ENCODE measurements at regions of chr20 and their contacts with region 1.

Region 1: GRCh38 chr20:59195316-59195993 is 31.8 kb downstream of the ZNF831 start:
- DNase-seq: no peak
- ATAC-seq: no peak
- H3K4me3 ChIP-seq: no peak overlapping the region
- H3K4me3 Mint-ChIP-seq: no peak overlapping the region
- H3K27ac ChIP-seq: no peak overlapping the region
- H3K27ac Mint-ChIP-seq: no peak overlapping the region
- H3K4me1 ChIP-seq: no peaks in the 10 kb centered on the region
- H3K4me1 Mint-ChIP-seq: peaks cover 4% of the 10 kb centered on the region
- H3K27me3 ChIP-seq: no peaks in the 10 kb centered on the region
- H3K27me3 Mint-ChIP-seq: no peaks in the 10 kb centered on the region
- CTCF ChIP-seq: no peak

Region 2: DNA sequence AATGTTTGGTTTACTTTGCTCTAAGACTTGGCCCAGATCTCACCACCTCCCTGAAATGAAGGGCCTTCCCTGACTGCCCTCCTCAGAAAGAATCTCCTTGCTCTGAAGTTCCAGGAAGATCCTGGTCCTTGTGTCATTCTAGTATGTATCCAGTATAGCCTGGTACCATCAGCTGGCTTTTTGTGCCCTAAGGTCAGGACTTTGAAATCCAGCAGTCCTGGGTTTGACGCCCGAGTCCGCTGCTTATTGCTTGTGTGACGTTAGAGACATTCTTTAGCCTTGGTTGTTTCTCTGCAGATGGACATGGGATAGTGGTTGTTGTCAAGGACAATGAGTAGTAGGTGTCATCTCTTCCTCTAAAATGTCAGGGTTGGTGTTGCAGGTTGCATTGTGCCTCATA is 80.1 kb before region 1 on chr20:
- CTCF ChIA-PET with region 1: no interaction called
- POLR2A ChIA-PET with region 1: no interaction called
- intact Hi-C with region 1: no loop called
- DNase-seq: no peak
- ATAC-seq: no peak
- H3K4me3 ChIP-seq: no peak overlapping the region
- H3K4me3 Mint-ChIP-seq: no peak overlapping the region
- H3K27ac ChIP-seq: no peak overlapping the region
- H3K27ac Mint-ChIP-seq: no peak overlapping the region
- H3K4me1 ChIP-seq: peaks cover 34% of the 10 kb centered on the region
- H3K4me1 Mint-ChIP-seq: peaks cover 37% of the 10 kb centered on the region
- H3K27me3 ChIP-seq: no peaks in the 10 kb centered on the region
- H3K27me3 Mint-ChIP-seq: no peaks in the 10 kb centered on the region
- CTCF ChIP-seq: no peak

Region 3: GRCh38 chr20:59134182-59134581 is 61.3 kb before region 1 on chr20:
- CTCF ChIA-PET with region 1: no interaction called
- POLR2A ChIA-PET with region 1: no interaction called
- intact Hi-C with region 1: loop called in 1 of 2 experiments (anchors 5 kb)
- DNase-seq: no peak
- ATAC-seq: no peak
- H3K4me3 ChIP-seq: no peak overlapping the region
- H3K4me3 Mint-ChIP-seq: no peak overlapping the region
- H3K27ac ChIP-seq: no peak overlapping the region
- H3K27ac Mint-ChIP-seq: no peak overlapping the region
- H3K4me1 ChIP-seq: peaks cover 4% of the 10 kb centered on the region
- H3K4me1 Mint-ChIP-seq: peaks cover 37% of the 10 kb centered on the region
- H3K27me3 ChIP-seq: no peaks in the 10 kb centered on the region
- H3K27me3 Mint-ChIP-seq: no peaks in the 10 kb centered on the region
- CTCF ChIP-seq: no peak

Region 4: GRCh38 chr20:59214606-59215547 is 19.4 kb after region 1 on chr20:
- CTCF ChIA-PET with region 1: no interaction called
- POLR2A ChIA-PET with region 1: no interaction called
- intact Hi-C with region 1: no loop called
- DNase-seq: no peak
- ATAC-seq: no peak
- H3K4me3 ChIP-seq: no peak overlapping the region
- H3K4me3 Mint-ChIP-seq: no peak overlapping the region
- H3K27ac ChIP-seq: no peak overlapping the region
- H3K27ac Mint-ChIP-seq: peak overlapping the region; percentile 47
- H3K4me1 ChIP-seq: no peaks in the 10 kb centered on the region
- H3K4me1 Mint-ChIP-seq: peaks cover 10% of the 10 kb centered on the region
- H3K27me3 ChIP-seq: no peaks in the 10 kb centered on the region
- H3K27me3 Mint-ChIP-seq: no peaks in the 10 kb centered on the region
- CTCF ChIP-seq: no peak

Region 5: GRCh38 chr20:59308493-59309201 is 113.2 kb after region 1 on chr20:
- CTCF ChIA-PET with region 1: no interaction called
- POLR2A ChIA-PET with region 1: no interaction called
- intact Hi-C with region 1: no loop called
- DNase-seq: no peak
- ATAC-seq: no peak
- H3K4me3 ChIP-seq: no peak overlapping the region
- H3K4me3 Mint-ChIP-seq: no peak overlapping the region
- H3K27ac ChIP-seq: no peak overlapping the region
- H3K27ac Mint-ChIP-seq: no peak overlapping the region
- H3K4me1 ChIP-seq: peaks cover 5% of the 10 kb centered on the region
- H3K4me1 Mint-ChIP-seq: peaks cover 24% of the 10 kb centered on the region
- H3K27me3 ChIP-seq: peaks cover 1 to 3% of the 10 kb centered on the region in 2 experiments
- H3K27me3 Mint-ChIP-seq: peaks cover 12% of the 10 kb centered on the region
- CTCF ChIP-seq: no peak

Region 6: DNA sequence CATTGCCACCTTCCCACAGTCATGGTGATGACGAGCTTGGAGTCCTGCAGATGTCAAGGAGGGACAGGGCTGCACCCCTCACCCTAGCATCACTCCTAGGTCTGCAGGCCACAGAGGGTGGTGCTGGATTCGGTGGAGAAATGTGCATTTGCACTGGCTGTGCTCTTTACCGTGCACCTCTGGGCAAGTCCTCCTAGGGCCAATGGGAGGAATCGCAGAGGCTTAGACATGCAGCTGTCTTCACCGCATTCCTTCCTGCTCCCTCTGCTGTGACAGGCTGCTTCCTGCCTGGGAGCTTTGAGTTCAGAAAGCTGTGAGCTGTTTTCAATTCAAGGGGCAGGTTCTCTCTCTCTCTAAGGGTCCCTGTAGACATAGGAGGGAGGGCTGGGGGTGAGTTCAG is 190.0 kb after region 1 on chr20:
- CTCF ChIA-PET with region 1: no interaction called
- POLR2A ChIA-PET with region 1: no interaction called
- intact Hi-C with region 1: no loop called
- DNase-seq: peak in 5 of 14 experiments; percentile 4 to 21 (median 18)
- ATAC-seq: peak; percentile 85
- H3K4me3 ChIP-seq: no peak overlapping the region
- H3K4me3 Mint-ChIP-seq: no peak overlapping the region
- H3K27ac ChIP-seq: peak overlapping the region in 1 of 2 donors; percentile 48
- H3K27ac Mint-ChIP-seq: peak overlapping the region; percentile 84
- H3K4me1 ChIP-seq: peaks cover 12% of the 10 kb centered on the region
- H3K4me1 Mint-ChIP-seq: peaks cover 10% of the 10 kb centered on the region
- H3K27me3 ChIP-seq: peaks cover 0 to 6% of the 10 kb centered on the region in 2 experiments
- H3K27me3 Mint-ChIP-seq: no peaks in the 10 kb centered on the region
- CTCF ChIP-seq: no peak

Measured in CD4-positive, alpha-beta T cell (primary cell).